MCF 10A (cell line): ENCODE measurements at regions of chr14 and their contacts with region 1.

Region 1: GRCh38 chr14:96584199-96584906 is 82.2 kb downstream of the PAPOLA start:
- DNase-seq: peak; percentile 61
- H3K4me3 Mint-ChIP-seq: no peak overlapping the region
- H3K27ac Mint-ChIP-seq: no peak overlapping the region
- H3K4me1 Mint-ChIP-seq: no peaks in the 10 kb centered on the region
- H3K27me3 Mint-ChIP-seq: no peaks in the 10 kb centered on the region
- CTCF ChIP-seq: peak; percentile 44

Region 2: DNA sequence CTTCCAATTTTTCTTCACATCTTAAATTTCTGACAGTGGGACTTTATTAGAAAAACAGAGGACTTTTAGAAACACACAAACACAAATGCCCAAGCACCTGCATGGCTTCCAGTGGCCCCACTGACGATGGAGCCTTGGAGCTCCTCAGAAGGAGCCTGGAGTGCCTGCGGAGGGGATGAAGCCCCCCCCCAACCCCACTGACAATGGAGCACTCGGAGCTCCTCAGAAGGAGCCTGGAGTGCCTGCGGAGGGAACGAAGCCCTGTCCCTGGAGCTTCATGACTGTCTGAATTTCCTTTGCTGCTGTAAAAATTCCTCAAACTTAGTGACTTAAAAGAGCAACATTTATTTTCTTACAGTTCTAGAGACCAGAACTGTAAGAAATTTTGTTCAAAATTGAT is 132.8 kb after region 1 on chr14:
- CTCF ChIA-PET with region 1: no interaction called
- POLR2A ChIA-PET with region 1: no interaction called
- intact Hi-C with region 1: no loop called
- DNase-seq: no peak
- H3K4me3 Mint-ChIP-seq: no peak overlapping the region
- H3K27ac Mint-ChIP-seq: no peak overlapping the region
- H3K4me1 Mint-ChIP-seq: no peaks in the 10 kb centered on the region
- H3K27me3 Mint-ChIP-seq: peaks cover 46% of the 10 kb centered on the region
- CTCF ChIP-seq: no peak

Region 3: DNA sequence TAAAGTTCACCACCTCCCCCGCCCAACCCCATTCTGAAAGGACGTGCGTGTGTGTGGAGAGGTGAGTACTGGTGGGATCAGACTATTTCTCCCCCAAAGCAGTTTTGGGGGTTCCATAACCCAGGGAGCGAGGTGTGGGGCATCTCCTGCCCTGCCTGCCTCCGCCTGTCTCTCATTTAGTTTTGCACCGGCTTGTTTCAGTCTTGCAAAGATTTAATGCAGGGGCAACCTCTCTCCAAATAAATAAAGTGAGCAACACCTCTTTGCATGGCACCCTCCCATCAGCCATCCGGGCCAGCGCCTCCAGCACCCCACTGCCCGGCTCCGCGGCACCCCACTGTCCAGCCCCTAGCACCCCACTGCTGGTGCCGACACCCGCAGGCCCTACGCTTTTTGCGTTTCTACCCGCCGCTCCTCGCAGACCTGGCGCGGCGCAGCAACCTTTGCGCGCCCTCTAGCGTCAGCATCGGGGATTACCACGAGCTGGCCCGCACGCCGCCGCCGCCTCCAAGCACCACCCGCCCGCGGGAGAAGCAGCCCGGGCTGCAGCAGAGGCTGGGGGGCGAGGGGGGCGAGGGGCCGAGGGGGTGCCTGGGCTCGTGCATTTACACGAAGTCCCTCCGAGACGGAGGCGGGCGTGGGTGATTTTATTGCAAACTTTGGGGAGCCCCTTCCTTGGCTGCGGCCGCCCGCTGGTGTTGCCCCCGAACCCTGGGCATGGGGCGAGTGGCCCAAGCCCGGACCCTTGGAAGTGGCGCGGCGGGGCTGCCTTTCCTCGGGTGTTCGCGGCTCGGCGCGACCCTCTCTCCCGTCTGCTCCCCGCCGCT is 157.0 kb after region 1 on chr14:
- CTCF ChIA-PET with region 1: interaction called, 22 read pairs
- POLR2A ChIA-PET with region 1: interaction called, 5 read pairs
- intact Hi-C with region 1: loop called (anchors 1 kb)
- DNase-seq: peak; percentile 43
- H3K4me3 Mint-ChIP-seq: peak overlapping the region; percentile 79
- H3K27ac Mint-ChIP-seq: no peak overlapping the region
- H3K4me1 Mint-ChIP-seq: peaks cover 6% of the 10 kb centered on the region
- H3K27me3 Mint-ChIP-seq: peaks cover 62% of the 10 kb centered on the region
- CTCF ChIP-seq: peak; percentile 96

Region 4: GRCh38 chr14:97172644-97173043 is 588.3 kb after region 1 on chr14:
- CTCF ChIA-PET with region 1: no interaction called
- POLR2A ChIA-PET with region 1: no interaction called
- intact Hi-C with region 1: no loop called
- DNase-seq: no peak
- H3K4me3 Mint-ChIP-seq: no peak overlapping the region
- H3K27ac Mint-ChIP-seq: no peak overlapping the region
- H3K4me1 Mint-ChIP-seq: no peaks in the 10 kb centered on the region
- H3K27me3 Mint-ChIP-seq: peaks cover 12% of the 10 kb centered on the region
- CTCF ChIP-seq: no peak